ENCODE measurements at regions of chr1 and their contacts with region 1.

Region 1: DNA sequence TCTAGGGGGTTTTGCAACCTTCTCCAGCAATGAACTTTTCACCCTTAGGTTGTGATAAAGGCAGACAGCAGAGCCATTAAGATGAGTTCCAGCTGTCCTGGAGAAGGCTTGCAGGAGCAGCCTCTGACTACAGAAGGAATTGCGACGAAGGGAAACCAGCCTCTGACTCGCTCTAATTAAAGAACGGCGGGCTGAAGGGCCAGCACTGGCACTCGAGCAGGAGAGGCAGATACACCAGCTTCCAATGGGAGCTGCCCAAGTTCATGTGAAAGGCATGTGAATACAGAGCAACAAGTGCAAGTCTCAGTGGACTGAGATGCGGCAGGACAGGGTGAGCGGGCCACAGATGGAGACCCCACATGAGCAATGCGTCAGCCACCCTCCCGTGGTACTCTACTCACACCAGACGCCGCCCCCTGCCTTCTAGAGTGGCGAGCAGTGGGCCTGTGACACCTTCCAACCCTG is 15.7 kb downstream of the RCC2 start:
- DNase-seq: no peak
- ATAC-seq: no peak
- H3K4me3 Mint-ChIP-seq: no peak overlapping the region
- H3K27ac Mint-ChIP-seq: peak overlapping the region; percentile 2
- H3K4me1 Mint-ChIP-seq: peaks cover 28% of the 10 kb centered on the region
- H3K27me3 Mint-ChIP-seq: no peaks in the 10 kb centered on the region
- CTCF ChIP-seq: no peak

Region 2: DNA sequence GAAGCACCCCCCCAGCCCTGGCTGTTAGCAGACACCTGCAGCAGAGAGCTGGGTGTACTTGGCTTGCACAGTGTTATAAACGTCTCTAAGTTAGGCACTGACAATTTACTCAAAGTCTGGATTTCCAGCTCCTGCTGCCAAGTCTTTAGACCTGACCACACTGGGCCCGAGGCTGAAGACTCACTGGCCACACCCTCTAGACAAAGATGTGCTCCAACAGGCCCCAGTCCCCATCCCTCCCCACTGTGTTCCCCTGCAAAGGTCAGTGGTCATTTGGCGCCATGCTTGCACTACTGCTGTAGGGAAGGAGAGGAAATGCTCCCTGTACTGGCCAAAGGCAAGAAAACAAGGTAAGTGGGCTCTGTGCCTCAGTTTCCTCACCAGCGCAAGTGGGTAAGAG is 20.7 kb before region 1 on chr1:
- CTCF ChIA-PET with region 1: no interaction called
- POLR2A ChIA-PET with region 1: no interaction called
- intact Hi-C with region 1: no loop called
- DNase-seq: no peak
- ATAC-seq: no peak
- H3K4me3 Mint-ChIP-seq: no peak overlapping the region
- H3K27ac Mint-ChIP-seq: no peak overlapping the region
- H3K4me1 Mint-ChIP-seq: no peaks in the 10 kb centered on the region
- H3K27me3 Mint-ChIP-seq: no peaks in the 10 kb centered on the region
- CTCF ChIP-seq: no peak

Region 3: DNA sequence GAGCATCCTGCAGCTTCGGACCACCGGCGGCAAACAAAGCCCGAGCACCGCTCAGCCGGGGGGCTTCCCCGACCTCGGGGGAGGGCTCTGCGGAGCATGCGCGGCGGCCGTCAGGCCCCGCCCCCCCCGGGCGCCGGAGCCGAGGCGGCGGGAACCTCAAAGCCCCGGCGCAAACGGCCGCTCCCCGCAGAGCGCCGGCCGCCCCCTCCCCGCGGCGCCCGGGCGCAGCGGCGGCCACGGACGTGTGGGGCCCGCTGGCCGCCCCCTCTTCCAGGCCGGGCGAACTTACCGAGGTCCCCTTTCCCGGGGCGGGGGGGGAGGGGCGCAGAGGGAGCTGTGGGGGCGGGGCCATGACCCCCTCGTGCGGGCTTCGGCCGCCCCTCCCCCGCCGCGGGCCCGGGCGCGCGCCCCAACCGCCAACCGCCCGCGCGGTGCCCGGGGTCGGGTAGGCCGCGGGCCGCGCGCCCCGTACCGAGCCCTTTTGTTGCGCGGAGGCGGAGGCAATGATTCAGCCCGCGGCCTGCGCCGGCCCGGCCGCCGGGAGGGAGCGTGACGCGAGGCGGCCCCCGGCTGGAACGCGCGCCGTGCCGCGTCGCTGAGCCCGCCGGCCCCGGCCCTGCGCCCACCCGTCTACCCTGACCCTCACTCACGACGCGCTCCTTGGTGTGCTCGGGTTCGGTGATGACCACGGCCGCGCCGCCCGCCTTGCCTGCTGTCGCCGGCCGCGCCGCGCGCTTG is 13.9 kb after region 1 on chr1:
- CTCF ChIA-PET with region 1: interaction called, 4 read pairs
- POLR2A ChIA-PET with region 1: interaction called, 15 read pairs
- intact Hi-C with region 1: no loop called
- DNase-seq: peak; percentile 70
- ATAC-seq: peak; percentile 50
- H3K4me3 Mint-ChIP-seq: peak overlapping the region; percentile 95
- H3K27ac Mint-ChIP-seq: peak overlapping the region; percentile 80
- H3K4me1 Mint-ChIP-seq: peaks cover 56% of the 10 kb centered on the region
- H3K27me3 Mint-ChIP-seq: no peaks in the 10 kb centered on the region
- CTCF ChIP-seq: no peak

Region 4: GRCh38 chr1:17574516-17574915 is 150.7 kb after region 1 on chr1:
- CTCF ChIA-PET with region 1: no interaction called
- POLR2A ChIA-PET with region 1: no interaction called
- intact Hi-C with region 1: no loop called
- DNase-seq: no peak
- ATAC-seq: no peak
- H3K4me3 Mint-ChIP-seq: no peak overlapping the region
- H3K27ac Mint-ChIP-seq: no peak overlapping the region
- H3K4me1 Mint-ChIP-seq: no peaks in the 10 kb centered on the region
- H3K27me3 Mint-ChIP-seq: no peaks in the 10 kb centered on the region
- CTCF ChIP-seq: no peak

Measured in activated CD8-positive, alpha-beta T cell treated with anti-CD3 and anti-CD28 coated beads for 36 hours (primary cell).